OCI-LY7 (cell line): ENCODE measurements at regions of chr10 and their contacts with region 1.

Region 1: DNA sequence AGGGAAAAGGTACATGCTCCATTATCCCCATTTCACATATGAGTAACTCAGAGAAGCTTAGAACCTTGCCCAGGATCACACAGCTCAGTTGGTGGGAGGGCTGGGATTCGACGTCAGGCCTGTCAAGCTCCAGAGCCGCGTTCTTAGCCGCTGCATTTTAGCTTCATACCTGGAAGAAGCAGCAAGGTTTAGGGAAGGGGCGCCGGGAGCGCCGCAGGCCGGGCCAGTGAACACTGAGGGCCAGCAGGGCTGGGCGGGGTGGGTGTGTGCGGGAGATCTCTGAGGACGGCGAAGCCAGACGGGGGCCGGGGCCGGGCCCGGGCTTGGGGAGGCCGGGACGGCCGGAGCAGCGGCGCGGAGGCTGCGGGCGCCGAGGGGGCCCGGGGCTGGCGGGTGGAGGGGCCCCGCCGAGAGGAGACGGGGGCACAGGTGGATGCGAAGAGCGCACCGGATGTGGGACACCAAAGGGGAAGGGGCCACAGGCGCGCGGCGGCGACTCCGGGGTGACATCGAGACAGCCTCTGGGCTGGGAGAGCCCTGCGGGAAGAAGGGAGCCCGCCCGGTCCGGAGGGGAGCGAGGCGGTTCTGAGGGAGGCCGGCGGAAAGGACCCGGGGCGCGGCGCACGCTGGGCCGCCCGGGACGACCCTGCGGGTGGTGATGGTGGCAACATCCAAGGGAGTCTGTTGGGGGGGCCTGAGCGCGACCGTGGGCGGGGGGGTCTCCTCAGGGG is 498 bp downstream of the NDST2 start:
- DNase-seq: peak; percentile 81
- H3K4me3 ChIP-seq: peak overlapping the region; percentile 87
- H3K27ac ChIP-seq: peak overlapping the region; percentile 70
- H3K4me1 ChIP-seq: peaks cover 21% of the 10 kb centered on the region
- CTCF ChIP-seq: no peak

Region 2: GRCh38 chr10:73591935-73592699 is 218.8 kb before region 1 on chr10:
- CTCF ChIA-PET with region 1: no interaction called
- POLR2A ChIA-PET with region 1: interaction called, 12 read pairs
- intact Hi-C with region 1: no loop called
- DNase-seq: peak; percentile 69
- H3K4me3 ChIP-seq: peak overlapping the region; percentile 12
- H3K27ac ChIP-seq: no peak overlapping the region
- H3K4me1 ChIP-seq: peaks cover 17% of the 10 kb centered on the region
- CTCF ChIP-seq: no peak

Region 3: DNA sequence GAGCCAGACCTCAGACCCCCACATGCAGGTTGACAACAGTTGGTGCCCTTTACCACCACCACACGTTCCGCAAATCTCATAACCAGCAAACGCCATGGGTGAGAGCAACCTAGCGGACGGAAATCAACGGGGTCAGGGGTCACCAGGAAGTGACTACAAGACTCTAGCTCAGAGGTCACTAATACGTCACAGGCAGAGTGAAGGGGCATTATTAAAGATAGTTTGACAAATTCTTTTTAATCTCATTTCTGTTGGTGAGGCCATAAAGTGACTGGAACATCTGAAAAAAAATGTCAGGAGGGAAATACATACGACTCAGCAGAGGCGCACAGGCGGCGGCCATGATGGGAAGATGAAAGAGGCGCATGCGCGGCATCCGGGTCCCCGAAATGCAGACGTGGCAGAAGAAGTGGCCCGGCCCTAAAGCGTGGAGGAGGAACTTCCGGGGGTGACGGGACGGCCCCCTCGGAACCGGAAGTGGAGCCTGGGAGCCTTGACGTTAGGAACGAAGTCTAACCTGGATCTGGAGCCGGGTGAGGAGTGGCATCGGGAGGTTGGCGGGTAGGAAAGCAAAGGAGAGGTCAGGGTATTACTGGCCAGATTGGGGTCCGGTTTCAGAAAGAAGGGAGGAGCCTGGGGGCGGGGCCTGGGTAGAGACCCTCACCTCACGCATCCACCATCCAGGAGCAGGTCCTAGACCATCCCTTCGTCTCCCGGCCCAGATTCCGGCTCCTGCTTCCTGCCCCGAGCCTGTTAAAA is 66.8 kb before region 1 on chr10 and contains the start of gene SEC24C:
- CTCF ChIA-PET with region 1: no interaction called
- POLR2A ChIA-PET with region 1: interaction called, 3 read pairs
- intact Hi-C with region 1: loop called (anchors 2 kb)
- DNase-seq: peak; percentile 96
- H3K4me3 ChIP-seq: peak within 1 kb of the TSS; percentile 88
- H3K27ac ChIP-seq: peak within 1 kb of the TSS; percentile 74
- H3K4me1 ChIP-seq: peaks cover 23% of the 10 kb centered on the region
- CTCF ChIP-seq: 0 out of 2 replicates have a peak, but pooled peaks have one; percentile 21
- total RNA-seq, gene SEC24C: 51.9 and 53.6 TPM in 2 replicates

Region 4: GRCh38 chr10:73772280-73773151 is 38.4 kb before region 1 on chr10:
- CTCF ChIA-PET with region 1: no interaction called
- POLR2A ChIA-PET with region 1: interaction called, 3 read pairs
- intact Hi-C with region 1: loop called (anchors 2 kb)
- DNase-seq: peak; percentile 82
- H3K4me3 ChIP-seq: peak overlapping the region; percentile 82
- H3K27ac ChIP-seq: peak overlapping the region; percentile 77
- H3K4me1 ChIP-seq: peaks cover 59% of the 10 kb centered on the region
- CTCF ChIP-seq: peak; percentile 45; the same call in 1 of the 2 replicates

Region 5: GRCh38 chr10:73785221-73785720 is 25.6 kb before region 1 on chr10 and contains the start of gene ZSWIM8:
- CTCF ChIA-PET with region 1: no interaction called
- POLR2A ChIA-PET with region 1: interaction called, 14 read pairs
- intact Hi-C with region 1: loop called (anchors 1 kb)
- DNase-seq: peak; percentile 95
- H3K4me3 ChIP-seq: peak within 1 kb of the TSS; percentile 83
- H3K27ac ChIP-seq: peak within 1 kb of the TSS; percentile 67
- H3K4me1 ChIP-seq: peaks cover 32% of the 10 kb centered on the region
- CTCF ChIP-seq: no peak
- total RNA-seq, gene ZSWIM8: 22.0 and 22.6 TPM in 2 replicates

Region 6: DNA sequence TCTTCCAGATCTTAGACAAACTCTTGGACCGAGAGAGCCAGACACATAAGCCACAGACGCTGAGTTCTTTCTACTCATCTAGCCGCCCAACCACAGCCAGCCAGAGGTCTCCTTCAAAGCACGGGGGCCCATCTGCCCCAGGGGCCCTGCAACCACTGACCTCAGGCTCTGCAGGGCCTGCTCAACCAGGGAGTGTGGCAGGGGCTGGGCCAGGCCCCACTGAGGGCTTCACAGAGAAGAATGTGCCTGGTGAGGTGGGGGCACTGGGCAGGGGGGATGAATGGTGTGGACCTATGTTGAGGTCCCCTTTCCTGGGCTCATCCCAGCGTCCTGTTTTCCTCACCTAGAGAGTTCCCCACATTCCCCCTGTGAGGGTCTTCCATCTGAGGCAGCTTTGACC is 14.1 kb before region 1 on chr10:
- CTCF ChIA-PET with region 1: interaction called, 3 read pairs
- POLR2A ChIA-PET with region 1: interaction called, 7 read pairs
- intact Hi-C with region 1: loop called (anchors 2 kb)
- DNase-seq: no peak
- H3K4me3 ChIP-seq: no peak overlapping the region
- H3K27ac ChIP-seq: no peak overlapping the region
- H3K4me1 ChIP-seq: no peaks in the 10 kb centered on the region
- CTCF ChIP-seq: no peak

Region 7: GRCh38 chr10:74096777-74097176 is 285.9 kb after region 1 on chr10:
- CTCF ChIA-PET with region 1: no interaction called
- POLR2A ChIA-PET with region 1: no interaction called
- intact Hi-C with region 1: no loop called
- DNase-seq: peak; percentile 43
- H3K4me3 ChIP-seq: no peak overlapping the region
- H3K27ac ChIP-seq: no peak overlapping the region
- H3K4me1 ChIP-seq: peaks cover 5% of the 10 kb centered on the region
- CTCF ChIP-seq: no peak